ENCODE measurements at regions of chr5 and their contacts with region 1.

Region 1: GRCh38 chr5:57900381-57900944 is 417.9 kb upstream of the ACTBL2 start:
- DNase-seq: no peak
- ATAC-seq: no peak
- H3K4me3 ChIP-seq: no peak overlapping the region
- H3K27ac ChIP-seq: no peak overlapping the region
- H3K4me1 ChIP-seq: peaks cover 0 to 29% (median 5%) of the 10 kb centered on the region in 9 donors
- H3K27me3 ChIP-seq: no peaks in the 10 kb centered on the region
- CTCF ChIP-seq: no peak

Region 2: GRCh38 chr5:57779383-57780223 is 120.9 kb before region 1 on chr5:
- intact Hi-C with region 1: no loop called
- DNase-seq: peak in 1 of 2 donors; percentile 56
- ATAC-seq: peak; percentile 71 to 89 (median 83)
- H3K4me3 ChIP-seq: peak overlapping the region in 3 of 10 donors; percentile 2 to 11 (median 8)
- H3K27ac ChIP-seq: peak overlapping the region in 7 of 10 donors; percentile 35 to 73 (median 64)
- H3K4me1 ChIP-seq: peaks cover 0 to 50% (median 13%) of the 10 kb centered on the region in 9 donors
- H3K27me3 ChIP-seq: no peaks in the 10 kb centered on the region
- CTCF ChIP-seq: peak; percentile 23 to 86 (median 69)

Region 3: DNA sequence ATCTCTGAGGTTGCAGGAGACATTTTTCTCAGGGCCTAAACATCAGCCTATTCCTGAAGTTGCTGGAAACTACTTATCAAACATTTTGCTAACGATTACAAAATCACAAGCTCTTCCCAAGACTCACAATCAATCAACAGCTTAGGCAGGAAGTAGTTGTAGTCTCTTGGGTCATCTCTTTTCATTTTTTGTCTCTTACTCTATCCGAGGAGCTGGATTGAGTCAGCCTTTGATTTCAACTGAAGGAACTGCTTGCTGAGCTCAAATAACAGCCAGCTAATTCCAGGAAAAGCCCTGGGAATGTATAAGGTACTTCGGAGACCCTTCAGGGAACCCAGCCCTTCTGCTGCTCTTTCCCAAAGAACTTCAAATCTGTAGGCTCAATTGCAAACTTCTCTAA is 160.5 kb after region 1 on chr5:
- intact Hi-C with region 1: loop called in 1 of 10 experiments (anchors 10 kb)
- DNase-seq: no peak
- ATAC-seq: peak in 5 of 8 donors; percentile 49 to 76 (median 58)
- H3K4me3 ChIP-seq: no peak overlapping the region
- H3K27ac ChIP-seq: peak overlapping the region in 2 of 10 donors; percentile 18 to 42
- H3K4me1 ChIP-seq: peaks cover 0 to 18% (median 5%) of the 10 kb centered on the region in 9 donors
- H3K27me3 ChIP-seq: no peaks in the 10 kb centered on the region
- CTCF ChIP-seq: no peak

Region 4: GRCh38 chr5:58156986-58157701 is 256.7 kb after region 1 on chr5:
- intact Hi-C with region 1: no loop called
- DNase-seq: peak in 1 of 2 donors; percentile 41
- ATAC-seq: peak in 7 of 8 donors; percentile 64 to 93 (median 90)
- H3K4me3 ChIP-seq: no peak overlapping the region
- H3K27ac ChIP-seq: peak overlapping the region in 5 of 10 donors; percentile 2 to 72 (median 66)
- H3K4me1 ChIP-seq: peaks cover 8 to 24% (median 14%) of the 10 kb centered on the region in 9 donors
- H3K27me3 ChIP-seq: no peaks in the 10 kb centered on the region
- CTCF ChIP-seq: no peak

Region 5: GRCh38 chr5:58273711-58274110 is 373.2 kb after region 1 on chr5:
- intact Hi-C with region 1: loop called in 1 of 10 experiments (anchors 10 kb)
- DNase-seq: no peak
- ATAC-seq: peak in 4 of 8 donors; percentile 35 to 71 (median 63)
- H3K4me3 ChIP-seq: no peak overlapping the region
- H3K27ac ChIP-seq: peak overlapping the region in 7 of 10 donors; percentile 2 to 72 (median 49)
- H3K4me1 ChIP-seq: peaks cover 0 to 20% (median 9%) of the 10 kb centered on the region in 9 donors
- H3K27me3 ChIP-seq: no peaks in the 10 kb centered on the region
- CTCF ChIP-seq: no peak